ENCODE measurements at regions of chr14 and their contacts with region 1.

Region 1: DNA sequence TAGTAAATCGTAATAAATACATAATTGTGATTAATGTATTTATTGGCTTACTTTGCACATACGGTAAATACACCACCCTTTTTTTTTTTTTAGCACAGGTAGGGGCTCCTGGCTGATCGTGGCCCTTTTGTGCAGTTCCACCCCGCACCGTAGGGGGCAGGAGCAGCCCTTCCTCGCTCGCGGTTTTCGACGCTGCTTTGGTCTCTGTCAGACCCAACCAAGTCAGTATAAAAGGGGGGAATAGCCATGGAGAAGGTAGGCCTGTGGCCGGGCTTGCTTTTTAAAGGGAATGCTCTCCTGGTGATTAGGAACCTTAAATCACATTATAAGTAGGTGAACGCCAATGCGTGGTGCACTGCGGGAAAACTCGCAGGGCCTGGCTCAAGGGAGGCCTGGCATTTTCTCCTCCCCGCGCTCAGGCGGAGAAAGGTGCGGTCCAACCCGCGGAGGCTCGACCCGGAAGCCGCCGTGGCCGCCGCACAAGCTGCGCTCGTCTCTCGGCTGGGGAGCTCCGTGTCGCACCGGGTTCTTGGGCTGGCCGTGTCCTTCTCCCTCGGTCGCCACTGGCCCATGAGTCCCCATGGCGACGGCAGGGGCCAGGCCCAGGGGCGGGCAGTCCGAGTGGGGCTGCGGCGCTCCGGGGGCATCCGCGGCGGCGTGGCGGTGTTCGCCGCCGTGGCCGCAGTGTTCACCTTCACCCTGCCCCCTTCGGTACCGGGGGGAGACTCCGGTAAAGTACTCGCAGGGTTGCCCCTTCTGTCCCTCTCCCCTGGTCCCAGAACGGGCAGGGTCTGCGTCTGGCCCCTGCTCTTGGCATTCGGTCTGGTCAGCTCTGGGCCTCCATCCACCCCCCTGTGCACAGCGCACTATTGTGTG is at the start of gene TMEM260:
- DNase-seq: peak; percentile 97
- H3K4me3 Mint-ChIP-seq: peak within 1 kb of the TSS; percentile 94
- H3K27ac Mint-ChIP-seq: peak within 1 kb of the TSS; percentile 95
- H3K4me1 Mint-ChIP-seq: peaks cover 25% of the 10 kb centered on the region
- H3K27me3 Mint-ChIP-seq: no peaks in the 10 kb centered on the region
- total RNA-seq, gene TMEM260: 12.0 and 14.7 TPM in 2 replicates

Region 2: GRCh38 chr14:56310643-56311042 is 268.9 kb before region 1 on chr14:
- intact Hi-C with region 1: no loop called
- DNase-seq: no peak
- H3K4me3 Mint-ChIP-seq: no peak overlapping the region
- H3K27ac Mint-ChIP-seq: no peak overlapping the region
- H3K4me1 Mint-ChIP-seq: no peaks in the 10 kb centered on the region
- H3K27me3 Mint-ChIP-seq: peaks cover 9% of the 10 kb centered on the region

Region 3: DNA sequence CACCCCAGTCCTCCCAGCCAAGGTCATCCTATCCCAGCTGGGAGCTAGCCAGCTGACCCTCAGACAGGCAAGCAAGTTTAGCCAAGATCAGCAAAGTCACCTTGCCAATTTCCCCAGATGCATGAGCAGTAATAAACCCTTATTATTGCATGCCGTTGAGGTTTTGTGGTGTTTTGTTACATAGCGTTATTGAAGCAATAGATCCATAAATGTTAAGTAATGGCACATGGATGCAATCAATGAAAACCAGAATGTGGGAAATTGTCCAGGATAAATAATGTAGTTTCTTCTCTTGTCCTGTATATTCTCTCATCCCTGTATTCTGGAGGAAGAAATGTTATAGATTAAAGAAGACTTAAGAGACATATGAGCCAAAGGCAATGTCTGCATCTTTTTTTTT is 18.0 kb before region 1 on chr14:
- intact Hi-C with region 1: no loop called
- DNase-seq: no peak
- H3K4me3 Mint-ChIP-seq: no peak overlapping the region
- H3K27ac Mint-ChIP-seq: no peak overlapping the region
- H3K4me1 Mint-ChIP-seq: no peaks in the 10 kb centered on the region
- H3K27me3 Mint-ChIP-seq: peaks cover 17% of the 10 kb centered on the region

Region 4: DNA sequence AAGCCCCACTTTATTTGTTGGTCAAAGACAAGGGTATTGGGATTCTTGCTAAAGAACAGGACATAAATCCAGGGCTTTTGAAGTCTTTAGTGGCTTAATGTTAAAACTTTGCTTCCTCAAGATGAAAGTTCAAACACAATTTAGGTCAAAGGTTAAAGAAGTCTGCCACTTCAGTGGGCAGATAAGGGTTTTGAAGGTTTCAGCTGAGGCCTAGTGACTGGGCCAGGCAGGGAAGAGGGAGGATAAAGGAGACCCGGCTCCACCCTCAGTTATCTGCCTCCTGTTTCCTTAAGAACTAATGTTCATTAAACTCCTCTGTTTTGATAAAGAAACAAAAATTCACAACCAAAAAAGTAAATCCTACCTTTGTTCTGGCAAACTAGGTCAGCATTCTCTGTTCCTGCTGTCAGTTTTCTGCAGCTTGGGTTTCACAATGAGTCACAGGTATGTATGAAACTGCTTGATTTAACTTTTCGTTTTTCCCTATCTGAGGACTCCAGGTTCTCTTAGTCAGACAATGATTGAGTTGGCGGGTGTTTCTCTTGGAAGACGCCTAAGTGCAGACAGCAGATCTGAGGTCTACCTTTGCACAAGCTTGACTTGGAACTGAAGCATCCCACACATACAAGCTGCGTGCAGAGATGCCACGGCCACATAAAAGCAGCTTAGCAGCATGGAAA is 480.8 kb after region 1 on chr14:
- intact Hi-C with region 1: loop called (anchors 2 kb)
- DNase-seq: peak; percentile 76
- H3K4me3 Mint-ChIP-seq: peak overlapping the region; percentile 16
- H3K27ac Mint-ChIP-seq: peak overlapping the region; percentile 83
- H3K4me1 Mint-ChIP-seq: peaks cover 17% of the 10 kb centered on the region
- H3K27me3 Mint-ChIP-seq: peaks cover 13% of the 10 kb centered on the region

Region 5: GRCh38 chr14:57268161-57269069 is 688.8 kb after region 1 on chr14 and contains the starts of genes AP5M1 and EXOC5:
- intact Hi-C with region 1: loop called (anchors 10 kb)
- DNase-seq: peak; percentile 98
- H3K4me3 Mint-ChIP-seq: peak within 1 kb of the TSS; percentile 96
- H3K27ac Mint-ChIP-seq: peak within 1 kb of the TSS; percentile 100
- H3K4me1 Mint-ChIP-seq: peaks cover 46% of the 10 kb centered on the region
- H3K27me3 Mint-ChIP-seq: no peaks in the 10 kb centered on the region
- total RNA-seq, gene AP5M1: 41.6 and 47.5 TPM in 2 replicates
- total RNA-seq, gene EXOC5: 76.8 and 80.5 TPM in 2 replicates